B cell (primary cell): ENCODE measurements at regions of chr6 and their contacts with region 1.

Region 1: DNA sequence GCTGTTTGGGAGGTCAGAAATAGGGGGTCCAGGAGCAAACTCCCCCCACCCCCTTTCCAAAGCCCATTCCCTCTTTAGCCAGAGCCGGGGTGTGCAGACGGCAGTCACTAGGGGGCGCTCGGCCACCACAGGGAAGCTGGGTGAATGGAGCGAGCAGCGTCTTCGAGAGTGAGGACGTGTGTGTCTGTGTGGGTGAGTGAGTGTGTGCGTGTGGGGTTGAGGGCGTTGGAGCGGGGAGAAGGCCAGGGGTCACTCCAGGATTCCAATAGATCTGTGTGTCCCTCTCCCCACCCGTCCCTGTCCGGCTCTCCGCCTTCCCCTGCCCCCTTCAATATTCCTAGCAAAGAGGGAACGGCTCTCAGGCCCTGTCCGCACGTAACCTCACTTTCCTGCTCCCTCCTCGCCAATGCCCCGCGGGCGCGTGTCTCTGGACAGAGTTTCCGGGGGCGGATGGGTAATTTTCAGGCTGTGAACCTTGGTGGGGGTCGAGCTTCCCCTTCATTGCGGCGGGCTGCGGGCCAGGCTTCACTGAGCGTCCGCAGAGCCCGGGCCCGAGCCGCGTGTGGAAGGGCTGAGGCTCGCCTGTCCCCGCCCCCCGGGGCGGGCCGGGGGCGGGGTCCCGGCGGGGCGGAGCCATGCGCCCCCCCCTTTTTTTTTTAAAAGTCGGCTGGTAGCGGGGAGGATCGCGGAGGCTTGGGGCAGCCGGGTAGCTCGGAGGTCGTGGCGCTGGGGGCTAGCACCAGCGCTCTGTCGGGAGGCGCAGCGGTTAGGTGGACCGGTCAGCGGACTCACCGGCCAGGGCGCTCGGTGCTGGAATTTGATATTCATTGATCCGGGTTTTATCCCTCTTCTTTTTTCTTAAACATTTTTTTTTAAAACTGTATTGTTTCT is at the start of gene VEGFA:
- DNase-seq: peak; percentile 91
- ATAC-seq: peak; percentile 77
- H3K4me3 ChIP-seq: peak within 1 kb of the TSS; percentile 54 to 71 (median 65)
- H3K4me3 Mint-ChIP-seq: peak within 1 kb of the TSS; percentile 84
- H3K27ac ChIP-seq: peak within 1 kb of the TSS in 1 of 2 donors; percentile 41
- H3K27ac Mint-ChIP-seq: peak within 1 kb of the TSS; percentile 72
- H3K4me1 ChIP-seq: peaks cover 7 to 25% of the 10 kb centered on the region in 2 donors
- H3K4me1 Mint-ChIP-seq: peaks cover 22% of the 10 kb centered on the region
- H3K27me3 ChIP-seq: peaks cover 0 to 42% (median 18%) of the 10 kb centered on the region in 4 experiments
- H3K27me3 Mint-ChIP-seq: peaks cover 24% of the 10 kb centered on the region
- CTCF ChIP-seq: peak; percentile 98
- total RNA-seq, gene VEGFA: 3.9 and 4.9 TPM in 2 replicates

Region 2: DNA sequence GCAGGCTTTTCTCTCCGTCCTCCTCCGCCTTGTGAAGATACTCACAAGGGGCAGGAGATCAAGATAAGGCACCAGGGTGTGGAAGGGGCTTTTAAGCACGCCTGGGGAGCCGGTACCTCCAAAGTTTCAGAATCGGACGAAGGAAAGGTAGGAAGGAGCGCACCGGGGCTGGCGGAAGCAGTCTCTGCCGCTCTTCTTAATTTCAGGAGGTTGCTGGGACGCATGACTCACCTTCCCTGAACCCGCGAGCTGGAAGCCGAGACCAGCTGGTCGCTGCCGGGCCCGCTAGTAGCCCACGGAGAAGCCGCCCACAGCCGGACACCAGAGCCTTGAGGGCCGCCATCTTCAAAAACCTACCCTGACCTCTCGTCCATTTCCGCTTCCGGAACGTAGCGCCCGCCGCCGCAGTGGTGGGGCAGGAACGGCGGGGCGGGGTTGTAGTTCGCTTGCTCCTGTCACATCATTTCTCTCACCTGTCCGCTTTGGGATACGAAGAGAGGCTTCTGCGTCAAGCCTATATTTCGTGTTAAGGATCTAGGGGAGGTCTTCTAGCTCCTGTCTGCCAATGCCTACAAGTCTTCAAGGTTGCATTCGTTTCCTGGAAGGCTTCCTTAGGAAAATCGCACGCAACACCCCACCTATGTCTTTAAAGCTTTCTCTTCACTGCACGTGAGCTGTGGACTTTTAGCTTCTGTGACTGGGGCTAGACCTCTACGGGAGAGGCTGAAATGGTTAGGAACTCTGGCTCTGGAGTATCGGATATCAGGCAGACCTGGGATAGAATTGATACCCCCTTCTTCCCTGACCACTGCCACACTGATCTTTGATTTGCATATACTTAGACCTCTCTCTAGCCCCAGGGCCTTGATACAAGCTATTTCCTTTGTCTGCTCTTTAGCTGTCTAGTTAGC is 82.1 kb before region 1 on chr6 and contains the start of gene MRPS18A:
- CTCF ChIA-PET with region 1: interaction called, 13 read pairs
- POLR2A ChIA-PET with region 1: interaction called, 3 read pairs
- intact Hi-C with region 1: no loop called
- DNase-seq: peak; percentile 83
- ATAC-seq: peak; percentile 92
- H3K4me3 ChIP-seq: peak within 1 kb of the TSS; percentile 80 to 98 (median 96)
- H3K4me3 Mint-ChIP-seq: peak within 1 kb of the TSS; percentile 97
- H3K27ac ChIP-seq: peak within 1 kb of the TSS; percentile 76 to 90
- H3K27ac Mint-ChIP-seq: peak within 1 kb of the TSS; percentile 92
- H3K4me1 ChIP-seq: peaks cover 37 to 42% of the 10 kb centered on the region in 2 donors
- H3K4me1 Mint-ChIP-seq: peaks cover 48% of the 10 kb centered on the region
- H3K27me3 ChIP-seq: no peaks in the 10 kb centered on the region
- H3K27me3 Mint-ChIP-seq: no peaks in the 10 kb centered on the region
- CTCF ChIP-seq: no peak
- total RNA-seq, gene MRPS18A: 37.0 and 39.6 TPM in 2 replicates

Region 3: GRCh38 chr6:43705996-43706395 is 63.8 kb before region 1 on chr6:
- CTCF ChIA-PET with region 1: interaction called, 10 read pairs
- POLR2A ChIA-PET with region 1: no interaction called
- intact Hi-C with region 1: no loop called
- DNase-seq: peak; percentile 67
- ATAC-seq: peak; percentile 22
- H3K4me3 ChIP-seq: peak overlapping the region in 1 of 5 experiments; percentile 44
- H3K4me3 Mint-ChIP-seq: peak overlapping the region; percentile 74
- H3K27ac ChIP-seq: peak overlapping the region; percentile 50 to 52
- H3K27ac Mint-ChIP-seq: peak overlapping the region; percentile 87
- H3K4me1 ChIP-seq: peaks cover 46 to 60% of the 10 kb centered on the region in 2 donors
- H3K4me1 Mint-ChIP-seq: peaks cover 53% of the 10 kb centered on the region
- H3K27me3 ChIP-seq: peaks cover 0 to 9% (median 0%) of the 10 kb centered on the region in 4 experiments
- H3K27me3 Mint-ChIP-seq: peaks cover 7% of the 10 kb centered on the region
- CTCF ChIP-seq: no peak

Region 4: GRCh38 chr6:43723737-43724295 is 46.0 kb before region 1 on chr6:
- CTCF ChIA-PET with region 1: interaction called, 12 read pairs
- POLR2A ChIA-PET with region 1: no interaction called
- intact Hi-C with region 1: loop called (anchors 1 kb)
- DNase-seq: peak; percentile 82
- ATAC-seq: peak; percentile 75
- H3K4me3 ChIP-seq: no peak overlapping the region
- H3K4me3 Mint-ChIP-seq: no peak overlapping the region
- H3K27ac ChIP-seq: no peak overlapping the region
- H3K27ac Mint-ChIP-seq: peak overlapping the region; percentile 16
- H3K4me1 ChIP-seq: peaks cover 20 to 24% of the 10 kb centered on the region in 2 donors
- H3K4me1 Mint-ChIP-seq: peaks cover 27% of the 10 kb centered on the region
- H3K27me3 ChIP-seq: no peaks in the 10 kb centered on the region
- H3K27me3 Mint-ChIP-seq: peaks cover 9% of the 10 kb centered on the region
- CTCF ChIP-seq: peak; percentile 77

Region 5: GRCh38 chr6:43758617-43759050 is 11.1 kb before region 1 on chr6:
- CTCF ChIA-PET with region 1: interaction called, 12 read pairs
- POLR2A ChIA-PET with region 1: no interaction called
- intact Hi-C with region 1: no loop called
- DNase-seq: peak; percentile 34
- ATAC-seq: peak; percentile 66
- H3K4me3 ChIP-seq: no peak overlapping the region
- H3K4me3 Mint-ChIP-seq: no peak overlapping the region
- H3K27ac ChIP-seq: no peak overlapping the region
- H3K27ac Mint-ChIP-seq: no peak overlapping the region
- H3K4me1 ChIP-seq: no peaks in the 10 kb centered on the region
- H3K4me1 Mint-ChIP-seq: peaks cover 3% of the 10 kb centered on the region
- H3K27me3 ChIP-seq: peaks cover 0 to 3% (median 0%) of the 10 kb centered on the region in 4 experiments
- H3K27me3 Mint-ChIP-seq: peaks cover 18% of the 10 kb centered on the region
- CTCF ChIP-seq: peak; percentile 66

Region 6: GRCh38 chr6:43817192-43817591 is 47.4 kb after region 1 on chr6:
- CTCF ChIA-PET with region 1: interaction called, 6 read pairs
- POLR2A ChIA-PET with region 1: no interaction called
- intact Hi-C with region 1: loop called (anchors 2 kb)
- DNase-seq: peak; percentile 31
- ATAC-seq: peak; percentile 57
- H3K4me3 ChIP-seq: no peak overlapping the region
- H3K4me3 Mint-ChIP-seq: no peak overlapping the region
- H3K27ac ChIP-seq: no peak overlapping the region
- H3K27ac Mint-ChIP-seq: no peak overlapping the region
- H3K4me1 ChIP-seq: no peaks in the 10 kb centered on the region
- H3K4me1 Mint-ChIP-seq: no peaks in the 10 kb centered on the region
- H3K27me3 ChIP-seq: peaks cover 0 to 2% (median 0%) of the 10 kb centered on the region in 4 experiments
- H3K27me3 Mint-ChIP-seq: peaks cover 17% of the 10 kb centered on the region
- CTCF ChIP-seq: peak; percentile 10

Region 7: GRCh38 chr6:43838276-43839036 is 68.7 kb after region 1 on chr6:
- CTCF ChIA-PET with region 1: no interaction called
- POLR2A ChIA-PET with region 1: no interaction called
- intact Hi-C with region 1: loop called (anchors 2 kb)
- DNase-seq: peak; percentile 13
- ATAC-seq: no peak
- H3K4me3 ChIP-seq: no peak overlapping the region
- H3K4me3 Mint-ChIP-seq: no peak overlapping the region
- H3K27ac ChIP-seq: no peak overlapping the region
- H3K27ac Mint-ChIP-seq: no peak overlapping the region
- H3K4me1 ChIP-seq: no peaks in the 10 kb centered on the region
- H3K4me1 Mint-ChIP-seq: no peaks in the 10 kb centered on the region
- H3K27me3 ChIP-seq: no peaks in the 10 kb centered on the region
- H3K27me3 Mint-ChIP-seq: peaks cover 14% of the 10 kb centered on the region
- CTCF ChIP-seq: no peak

Region 8: DNA sequence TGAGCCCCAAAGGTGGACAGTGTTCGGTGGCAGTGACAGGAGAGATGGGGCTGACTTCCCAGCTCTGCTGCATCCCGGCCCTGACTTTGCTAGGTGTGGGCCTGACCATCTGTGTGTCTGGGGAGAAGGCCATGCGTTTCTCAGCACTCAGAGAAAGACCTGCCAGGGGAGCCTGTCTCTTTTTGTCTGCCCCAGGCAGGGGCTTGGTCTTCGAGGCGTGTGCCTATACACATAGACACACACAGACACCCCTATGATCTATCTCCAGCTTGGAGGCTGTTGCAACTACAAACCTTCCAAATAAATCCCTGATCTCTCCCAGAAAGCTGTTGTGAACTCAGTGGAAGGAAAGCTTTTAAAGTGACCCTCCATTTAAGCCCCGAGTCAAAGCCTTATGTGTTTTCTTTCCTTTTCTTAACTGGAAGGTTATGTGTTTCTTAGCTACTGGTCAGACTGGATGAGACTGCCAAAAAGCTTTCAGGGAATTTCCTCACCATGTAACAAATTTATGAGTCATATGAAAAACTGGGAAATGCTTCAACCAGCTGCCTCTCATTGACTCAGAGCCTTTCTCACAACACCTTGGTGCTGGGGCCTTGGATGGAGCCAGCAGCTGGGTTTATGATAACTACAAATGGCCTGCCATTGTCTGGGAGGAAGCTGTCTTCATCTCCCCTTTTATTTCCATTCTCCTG is 720.3 kb after region 1 on chr6:
- CTCF ChIA-PET with region 1: no interaction called
- POLR2A ChIA-PET with region 1: no interaction called
- intact Hi-C with region 1: no loop called
- DNase-seq: no peak
- ATAC-seq: no peak
- H3K4me3 ChIP-seq: no peak overlapping the region
- H3K4me3 Mint-ChIP-seq: no peak overlapping the region
- H3K27ac ChIP-seq: no peak overlapping the region
- H3K27ac Mint-ChIP-seq: no peak overlapping the region
- H3K4me1 ChIP-seq: no peaks in the 10 kb centered on the region
- H3K4me1 Mint-ChIP-seq: no peaks in the 10 kb centered on the region
- H3K27me3 ChIP-seq: peaks cover 0 to 3% (median 0%) of the 10 kb centered on the region in 4 experiments
- H3K27me3 Mint-ChIP-seq: peaks cover 41% of the 10 kb centered on the region
- CTCF ChIP-seq: no peak